ENCODE measurements at regions of chr12 and their contacts with region 1.

Region 1: GRCh38 chr12:48765753-48766162 is 23.1 kb downstream of the ADCY6 start:
- DNase-seq: peak in 1 of 9 donors; percentile 44
- ATAC-seq: peak; percentile 69
- H3K4me3 ChIP-seq: no peak overlapping the region
- H3K4me3 Mint-ChIP-seq: peak overlapping the region in 1 of 10 donors; percentile 62
- H3K27ac ChIP-seq: no peak overlapping the region
- H3K27ac Mint-ChIP-seq: no peak overlapping the region
- H3K4me1 ChIP-seq: no peaks in the 10 kb centered on the region
- H3K4me1 Mint-ChIP-seq: peaks cover 0 to 21% (median 10%) of the 10 kb centered on the region in 7 donors
- H3K27me3 ChIP-seq: no peaks in the 10 kb centered on the region
- H3K27me3 Mint-ChIP-seq: peaks cover 0 to 9% (median 0%) of the 10 kb centered on the region in 5 donors

Region 2: DNA sequence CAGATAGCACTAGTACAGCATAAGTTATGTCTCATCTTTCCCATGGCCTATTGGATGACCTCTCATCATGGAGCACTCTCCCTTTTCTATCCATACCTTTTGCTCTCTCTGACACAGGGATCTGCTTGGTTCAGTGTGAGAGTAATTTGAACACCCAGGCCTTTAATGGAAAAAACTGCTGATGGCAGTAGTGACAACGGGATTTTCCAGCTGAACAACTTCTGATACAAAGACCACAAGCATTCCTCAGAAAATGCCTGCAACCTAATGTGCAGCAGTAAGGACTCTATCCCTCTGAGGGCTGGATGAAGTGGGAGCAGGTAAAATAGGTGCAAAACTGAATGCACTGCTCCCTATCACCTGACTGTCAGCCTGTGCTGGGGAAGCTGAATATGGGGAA is 134.7 kb before region 1 on chr12:
- CTCF ChIA-PET with region 1: no interaction called
- POLR2A ChIA-PET with region 1: no interaction called
- intact Hi-C with region 1: no loop called
- DNase-seq: no peak
- ATAC-seq: no peak
- H3K4me3 ChIP-seq: no peak overlapping the region
- H3K4me3 Mint-ChIP-seq: no peak overlapping the region
- H3K27ac ChIP-seq: no peak overlapping the region
- H3K27ac Mint-ChIP-seq: no peak overlapping the region
- H3K4me1 ChIP-seq: no peaks in the 10 kb centered on the region
- H3K4me1 Mint-ChIP-seq: no peaks in the 10 kb centered on the region
- H3K27me3 ChIP-seq: no peaks in the 10 kb centered on the region
- H3K27me3 Mint-ChIP-seq: peaks cover 28 to 36% (median 29%) of the 10 kb centered on the region in 5 donors

Region 3: DNA sequence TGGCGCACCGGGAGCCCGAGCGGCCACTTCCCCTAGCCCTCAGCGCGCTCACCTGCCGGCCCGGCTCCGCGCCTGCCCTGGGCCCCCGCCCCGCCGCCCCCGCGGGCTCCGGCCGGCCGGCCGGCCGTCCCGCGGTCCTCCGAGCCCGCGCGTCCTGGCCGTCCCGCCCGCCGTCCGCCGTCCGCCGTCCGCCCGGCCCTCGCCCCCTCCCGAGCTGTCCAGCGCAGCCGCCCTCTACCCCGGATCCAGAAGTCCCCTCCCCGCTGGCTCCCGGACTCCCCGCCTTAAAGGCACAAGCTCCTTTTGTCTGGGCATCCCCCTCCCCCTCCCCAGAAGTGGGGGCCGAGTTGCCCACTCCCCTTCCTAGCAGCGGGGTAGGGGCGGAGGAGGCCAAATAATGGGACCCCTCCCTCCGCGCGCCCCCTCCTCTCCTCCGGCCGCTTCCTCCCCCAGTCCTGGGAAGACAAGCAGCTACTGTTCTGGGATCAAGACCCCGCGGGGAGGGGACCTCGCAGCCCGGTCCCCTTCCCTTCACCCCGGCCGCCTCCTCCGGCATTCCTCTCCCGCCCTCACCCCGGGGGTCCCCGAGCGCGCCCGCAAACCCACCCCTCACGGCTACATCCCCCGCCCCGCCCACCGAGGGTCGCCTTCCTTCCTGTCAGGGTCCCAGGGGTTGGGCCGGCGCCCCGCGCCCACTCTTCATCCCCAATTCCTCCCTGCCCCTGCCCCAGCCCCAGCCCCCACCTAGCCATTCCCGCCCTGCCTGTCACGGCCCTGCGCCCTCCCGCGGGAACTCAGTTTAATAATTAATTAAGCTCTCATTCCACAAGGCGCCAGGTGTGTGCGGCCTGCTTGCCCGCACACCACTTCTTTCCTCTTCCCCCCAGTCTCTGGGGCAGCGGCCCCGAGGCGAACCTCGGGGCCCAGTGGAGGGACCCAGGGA is 23.4 kb after region 1 on chr12 and contains the start of gene ADCY6:
- CTCF ChIA-PET with region 1: no interaction called
- POLR2A ChIA-PET with region 1: interaction called, 3 read pairs
- intact Hi-C with region 1: loop called in 1 of 2 experiments (anchors 2 kb)
- DNase-seq: peak in 1 of 9 donors; percentile 8
- ATAC-seq: peak; percentile 34
- H3K4me3 ChIP-seq: no peak within 1 kb of the TSS
- H3K4me3 Mint-ChIP-seq: peak within 1 kb of the TSS; percentile 59 to 86 (median 66)
- H3K27ac ChIP-seq: no peak within 1 kb of the TSS
- H3K27ac Mint-ChIP-seq: no peak within 1 kb of the TSS
- H3K4me1 ChIP-seq: no peaks in the 10 kb centered on the region
- H3K4me1 Mint-ChIP-seq: peaks cover 5 to 14% (median 10%) of the 10 kb centered on the region in 7 donors
- H3K27me3 ChIP-seq: peaks cover 12 to 15% of the 10 kb centered on the region in 2 donors
- H3K27me3 Mint-ChIP-seq: peaks cover 44 to 65% (median 53%) of the 10 kb centered on the region in 5 donors
- total RNA-seq, gene ADCY6: 0.07 to 0.22 (median 0.08) TPM in 3 of 5 experiments, not detected in the others

Region 4: DNA sequence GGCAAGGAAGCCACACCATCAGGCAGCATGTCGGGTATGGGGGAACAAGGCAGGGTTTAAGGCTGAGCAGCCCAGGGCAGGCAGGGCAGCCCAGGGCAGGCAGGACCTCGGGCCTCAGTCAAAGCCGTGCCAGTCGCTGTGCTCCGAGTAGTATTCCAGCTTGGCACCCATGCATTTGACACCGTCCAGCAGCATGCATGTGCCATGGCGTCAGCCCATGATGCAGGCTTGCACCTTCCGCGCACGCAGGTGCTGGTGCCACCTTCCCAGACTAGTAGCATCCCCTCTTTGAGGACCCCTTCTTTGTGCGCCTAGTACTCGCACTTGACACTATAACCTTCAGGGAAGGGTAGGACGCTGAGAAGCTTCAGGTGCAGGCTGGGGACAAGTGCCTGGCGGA is 34.7 kb after region 1 on chr12:
- CTCF ChIA-PET with region 1: no interaction called
- POLR2A ChIA-PET with region 1: no interaction called
- intact Hi-C with region 1: no loop called
- DNase-seq: no peak
- ATAC-seq: no peak
- H3K4me3 ChIP-seq: no peak overlapping the region
- H3K4me3 Mint-ChIP-seq: no peak overlapping the region
- H3K27ac ChIP-seq: no peak overlapping the region
- H3K27ac Mint-ChIP-seq: no peak overlapping the region
- H3K4me1 ChIP-seq: no peaks in the 10 kb centered on the region
- H3K4me1 Mint-ChIP-seq: peaks cover 0 to 16% (median 7%) of the 10 kb centered on the region in 7 donors
- H3K27me3 ChIP-seq: no peaks in the 10 kb centered on the region
- H3K27me3 Mint-ChIP-seq: peaks cover 0 to 5% (median 0%) of the 10 kb centered on the region in 5 donors

Region 5: GRCh38 chr12:49296034-49296835 is 530.5 kb after region 1 on chr12:
- CTCF ChIA-PET with region 1: no interaction called
- POLR2A ChIA-PET with region 1: no interaction called
- intact Hi-C with region 1: no loop called
- DNase-seq: peak; percentile 37 to 75 (median 58)
- ATAC-seq: peak; percentile 82
- H3K4me3 ChIP-seq: peak overlapping the region; percentile 36
- H3K4me3 Mint-ChIP-seq: peak overlapping the region; percentile 57 to 83 (median 74)
- H3K27ac ChIP-seq: no peak overlapping the region
- H3K27ac Mint-ChIP-seq: no peak overlapping the region
- H3K4me1 ChIP-seq: peaks cover 10 to 11% of the 10 kb centered on the region in 2 donors
- H3K4me1 Mint-ChIP-seq: peaks cover 7 to 27% (median 21%) of the 10 kb centered on the region in 7 donors
- H3K27me3 ChIP-seq: peaks cover 0 to 28% of the 10 kb centered on the region in 2 donors
- H3K27me3 Mint-ChIP-seq: peaks cover 38 to 68% (median 46%) of the 10 kb centered on the region in 5 donors